Activated CD8-positive, alpha-beta memory T cell treated with anti-CD3 and anti-CD28 coated beads, Interleukin-2, amount 10 ng/mL, durations not matched to agents 7 days and 5 days (primary cell): ENCODE measurements at regions of chr6 and their contacts with region 1.

Region 1: DNA sequence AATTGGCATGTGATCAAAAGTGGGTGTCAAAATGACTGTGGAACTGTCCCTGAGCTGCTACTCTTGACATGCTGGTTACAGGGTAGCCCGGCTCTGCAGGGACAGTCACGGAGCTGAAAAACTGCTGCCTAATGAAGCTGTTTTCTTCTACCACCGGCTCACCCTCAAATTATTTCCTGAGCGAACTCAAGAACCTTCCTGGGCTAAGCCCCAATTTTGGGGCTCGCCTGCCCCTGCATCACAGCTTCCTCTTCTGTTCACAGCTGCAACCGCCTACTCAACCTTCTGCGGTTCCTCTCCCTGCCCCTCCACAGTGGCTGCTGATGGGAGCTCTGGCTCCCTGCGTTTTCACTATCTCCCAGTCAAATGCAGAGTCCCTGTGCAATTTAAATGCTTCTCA is 110.8 kb upstream of the MLN start:
- DNase-seq: peak; percentile 78
- ATAC-seq: peak; percentile 79
- H3K4me3 Mint-ChIP-seq: peak overlapping the region; percentile 6
- H3K27ac Mint-ChIP-seq: peak overlapping the region; percentile 86
- H3K4me1 Mint-ChIP-seq: peaks cover 39% of the 10 kb centered on the region
- H3K27me3 Mint-ChIP-seq: no peaks in the 10 kb centered on the region

Region 2: DNA sequence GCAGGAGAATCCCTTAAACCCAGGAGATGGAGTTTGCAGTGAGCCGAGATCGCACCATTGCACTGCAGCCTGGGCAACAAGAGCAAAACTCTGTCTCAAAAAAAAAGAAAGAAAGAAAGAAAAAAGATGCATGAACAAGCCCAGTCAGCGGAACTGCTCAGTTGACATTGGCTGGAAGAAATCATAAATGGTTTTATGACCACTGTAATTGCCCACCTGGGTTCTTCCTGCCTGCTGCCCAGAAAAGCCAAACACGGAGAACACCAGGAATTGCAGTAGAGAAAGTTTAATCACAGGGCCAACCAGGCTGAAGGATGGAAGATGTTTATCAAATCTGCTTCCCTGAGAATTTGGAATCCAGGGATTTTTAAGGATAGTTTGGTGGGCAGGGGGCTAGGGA is 357.3 kb before region 1 on chr6:
- CTCF ChIA-PET with region 1: no interaction called
- DNase-seq: no peak
- ATAC-seq: no peak
- H3K4me3 Mint-ChIP-seq: no peak overlapping the region
- H3K27ac Mint-ChIP-seq: no peak overlapping the region
- H3K4me1 Mint-ChIP-seq: peaks cover 14% of the 10 kb centered on the region
- H3K27me3 Mint-ChIP-seq: no peaks in the 10 kb centered on the region

Region 3: DNA sequence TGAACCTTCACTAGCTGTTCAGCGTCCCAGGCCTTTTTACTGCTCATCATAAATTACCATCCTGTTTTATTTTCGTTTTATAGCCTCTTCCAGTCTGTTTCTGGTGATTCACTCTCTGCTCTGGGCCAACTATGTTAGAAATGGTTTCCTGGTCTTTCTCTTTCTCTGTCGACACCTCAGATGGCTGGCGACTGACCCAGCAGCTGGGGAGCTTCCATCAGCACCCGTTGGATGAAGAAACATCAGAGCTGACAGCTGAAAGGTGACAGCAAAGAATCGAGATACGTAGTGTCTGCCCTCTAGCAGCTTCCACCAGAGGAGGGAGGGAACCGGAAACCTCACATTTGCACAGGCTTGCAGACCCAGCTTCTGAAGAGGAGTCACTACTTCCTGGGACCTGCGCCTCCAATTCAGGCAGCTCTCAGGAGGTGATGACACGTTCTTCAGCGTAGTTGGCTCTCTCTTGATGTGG is 27.9 kb before region 1 on chr6:
- CTCF ChIA-PET with region 1: no interaction called
- DNase-seq: peak; percentile 61
- ATAC-seq: peak; percentile 69
- H3K4me3 Mint-ChIP-seq: no peak overlapping the region
- H3K27ac Mint-ChIP-seq: peak overlapping the region; percentile 67
- H3K4me1 Mint-ChIP-seq: peaks cover 15% of the 10 kb centered on the region
- H3K27me3 Mint-ChIP-seq: peaks cover 39% of the 10 kb centered on the region

Region 4: DNA sequence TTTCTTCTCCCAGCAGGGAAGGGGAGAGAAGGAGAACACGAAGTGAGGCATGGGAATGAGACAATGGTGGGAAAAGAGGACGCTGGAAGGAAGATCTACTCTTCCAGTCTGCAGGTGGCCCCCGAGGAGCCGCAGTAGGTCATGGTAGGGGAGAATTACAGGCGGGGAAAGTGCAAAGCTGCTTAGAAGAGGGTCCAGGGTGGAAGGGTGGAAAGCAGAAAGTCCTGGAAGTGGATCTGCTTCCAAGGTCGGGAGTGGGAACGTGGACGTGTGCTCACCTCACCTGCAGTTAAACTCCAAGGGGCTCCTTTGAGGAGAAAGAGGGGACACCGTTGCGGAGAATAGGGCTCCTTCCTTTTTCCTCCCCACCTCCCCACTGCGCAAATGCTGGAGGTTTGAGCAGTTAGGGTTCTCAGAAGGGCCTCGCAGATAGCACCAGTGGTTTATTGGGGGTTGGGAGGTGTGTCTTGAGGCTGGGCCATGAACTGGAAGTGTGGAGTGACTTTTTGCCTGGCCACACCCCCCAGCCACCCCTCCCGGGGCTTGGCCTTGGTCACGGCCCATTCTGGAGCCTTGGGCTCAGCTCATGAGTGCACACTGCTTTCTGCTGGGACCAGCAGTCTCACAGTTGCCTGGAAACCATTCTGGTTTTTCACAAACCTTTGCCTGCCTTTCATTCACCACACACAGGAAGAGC is 10.4 kb before region 1 on chr6:
- CTCF ChIA-PET with region 1: interaction called, 19 read pairs
- DNase-seq: peak; percentile 99
- ATAC-seq: peak; percentile 89
- H3K4me3 Mint-ChIP-seq: peak overlapping the region; percentile 82
- H3K27ac Mint-ChIP-seq: peak overlapping the region; percentile 95
- H3K4me1 Mint-ChIP-seq: peaks cover 79% of the 10 kb centered on the region
- H3K27me3 Mint-ChIP-seq: no peaks in the 10 kb centered on the region